ENCODE measurements at regions of chr17 and their contacts with region 1.

Region 1: DNA sequence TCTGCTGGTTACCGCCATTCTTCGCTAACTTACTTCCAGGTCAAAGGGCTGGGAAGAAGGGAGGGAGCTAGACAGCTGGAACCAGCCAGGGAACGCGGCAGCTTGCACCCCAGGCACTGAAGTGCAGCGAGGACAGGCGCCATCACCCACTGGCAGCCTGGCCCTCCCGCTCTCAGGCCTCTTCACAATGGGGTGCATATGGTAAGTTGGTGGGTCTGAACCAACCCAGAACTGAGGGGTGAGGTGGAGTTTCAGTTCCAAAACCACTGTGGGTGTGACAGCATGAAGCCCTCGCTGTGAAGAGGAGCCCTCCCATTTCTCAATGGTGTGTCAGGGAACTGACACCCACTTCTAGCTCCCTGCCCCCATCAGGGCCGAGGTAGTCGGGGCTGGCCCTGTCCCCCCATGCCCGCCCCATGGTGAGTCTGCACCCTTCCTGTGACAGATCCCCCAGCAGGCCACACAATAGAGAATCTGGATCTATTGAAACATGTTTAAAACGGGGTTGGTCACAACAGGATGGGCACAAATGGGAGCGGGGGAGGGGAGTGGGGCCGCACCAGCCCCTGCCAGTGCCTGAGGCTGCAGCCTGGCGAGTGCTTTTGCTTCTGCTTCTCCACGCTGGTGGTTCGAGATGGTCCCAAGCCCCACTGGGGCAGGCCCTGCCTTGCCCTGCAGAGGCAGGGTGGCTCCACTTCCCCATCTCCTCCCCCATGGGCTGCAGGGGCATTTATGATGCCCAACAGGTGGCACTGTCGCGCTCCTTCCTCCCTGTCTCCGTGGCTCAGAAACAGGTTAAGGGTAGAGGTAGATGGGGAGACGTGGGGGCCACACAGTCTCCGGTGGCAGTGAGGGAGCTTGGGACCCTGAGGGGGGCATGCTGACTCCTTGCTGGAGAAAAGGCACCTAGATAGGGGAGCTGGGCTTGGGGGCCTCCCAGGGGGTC is 2.3 kb downstream of the LIMD2 start:
- DNase-seq: no peak
- H3K4me3 ChIP-seq: no peak overlapping the region
- CTCF ChIP-seq: peak; percentile 66

Region 2: DNA sequence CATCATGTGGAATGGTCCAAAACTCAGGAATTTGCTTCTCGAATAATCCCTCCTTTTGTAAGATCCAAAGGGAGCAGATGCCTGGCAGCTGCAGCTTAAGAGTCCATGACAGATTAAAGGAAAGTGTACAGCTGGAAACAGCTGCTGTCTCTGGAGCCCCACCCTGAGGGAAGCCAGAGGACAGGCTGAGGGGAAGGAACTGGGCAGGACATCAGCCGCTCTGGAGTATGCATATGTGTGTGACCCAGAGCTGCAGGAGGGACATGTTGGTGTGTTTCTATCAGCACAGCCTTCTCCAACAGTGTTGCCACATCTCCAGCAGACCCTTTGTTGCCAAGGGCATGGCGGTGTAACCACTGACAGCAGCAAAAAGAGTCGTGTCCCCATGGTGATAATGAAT is 297.8 kb before region 1 on chr17:
- CTCF ChIA-PET with region 1: no interaction called
- POLR2A ChIA-PET with region 1: no interaction called
- DNase-seq: no peak
- H3K4me3 ChIP-seq: no peak overlapping the region
- CTCF ChIP-seq: no peak

Region 3: GRCh38 chr17:63486317-63487013 is 211.1 kb before region 1 on chr17:
- CTCF ChIA-PET with region 1: no interaction called
- POLR2A ChIA-PET with region 1: no interaction called
- DNase-seq: no peak
- H3K4me3 ChIP-seq: no peak overlapping the region
- CTCF ChIP-seq: no peak

Region 4: DNA sequence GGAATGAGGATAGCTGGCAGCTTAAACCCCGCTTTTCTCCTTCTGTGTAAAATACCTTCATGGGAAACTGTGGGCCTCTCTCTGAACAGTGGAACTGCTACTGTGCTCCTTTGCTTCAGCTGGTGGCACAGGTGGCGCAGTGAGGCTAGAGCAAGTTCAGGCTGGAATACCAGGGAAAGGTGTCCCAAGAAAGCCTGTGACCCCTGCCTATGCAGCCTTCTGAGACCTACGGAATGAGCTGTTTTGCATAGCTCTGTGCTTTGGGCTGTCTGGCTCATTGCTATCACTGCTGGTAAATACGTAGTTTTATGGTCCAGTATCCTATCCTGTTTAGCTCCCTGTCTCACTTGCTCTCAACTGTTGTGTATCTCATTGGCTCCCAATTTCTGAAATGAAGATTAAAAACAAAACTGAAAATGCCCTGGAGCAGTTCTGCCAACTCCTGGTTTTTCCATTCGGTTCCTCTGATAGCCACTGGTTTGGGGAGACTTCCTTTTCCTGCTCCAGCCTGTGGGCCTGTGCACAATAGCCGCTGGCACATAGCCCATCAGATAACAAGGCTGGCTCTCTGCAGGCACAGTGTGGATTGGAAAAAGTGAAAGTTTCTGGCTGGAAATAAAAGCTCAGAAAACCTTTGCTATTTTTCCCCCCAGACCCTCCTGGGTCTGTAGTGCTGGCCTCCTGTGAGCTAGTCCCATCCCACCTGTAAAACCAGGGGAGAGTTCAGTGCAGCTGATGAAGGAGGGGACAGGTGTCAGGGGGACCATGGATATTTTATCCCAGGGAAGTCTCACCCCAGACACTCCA is 21.8 kb before region 1 on chr17:
- CTCF ChIA-PET with region 1: interaction called, 73 read pairs
- POLR2A ChIA-PET with region 1: no interaction called
- DNase-seq: peak; percentile 21
- H3K4me3 ChIP-seq: no peak overlapping the region
- CTCF ChIP-seq: no peak

Region 5: DNA sequence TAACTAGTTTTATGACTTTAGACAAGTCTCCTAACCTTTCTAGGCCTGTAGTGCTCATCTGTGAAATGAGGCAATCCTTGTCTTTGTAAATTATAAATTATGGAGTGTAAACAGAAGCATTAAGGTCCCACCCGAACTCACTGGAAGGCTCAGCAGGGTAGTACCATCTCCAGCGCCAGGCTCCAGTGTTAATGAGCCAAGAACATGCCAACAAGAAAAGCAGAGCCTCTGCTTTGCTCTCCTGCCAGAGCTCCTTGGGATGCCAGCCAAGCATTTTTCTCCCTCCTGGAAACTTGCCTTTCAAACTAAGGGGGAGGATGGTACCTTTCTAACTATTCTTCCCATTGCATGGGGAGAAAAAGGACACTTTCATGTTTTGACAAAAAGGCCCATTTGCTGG is 12.6 kb before region 1 on chr17:
- CTCF ChIA-PET with region 1: interaction called, 73 read pairs
- POLR2A ChIA-PET with region 1: interaction called, 4 read pairs
- DNase-seq: no peak
- H3K4me3 ChIP-seq: no peak overlapping the region
- CTCF ChIP-seq: no peak

Region 6: DNA sequence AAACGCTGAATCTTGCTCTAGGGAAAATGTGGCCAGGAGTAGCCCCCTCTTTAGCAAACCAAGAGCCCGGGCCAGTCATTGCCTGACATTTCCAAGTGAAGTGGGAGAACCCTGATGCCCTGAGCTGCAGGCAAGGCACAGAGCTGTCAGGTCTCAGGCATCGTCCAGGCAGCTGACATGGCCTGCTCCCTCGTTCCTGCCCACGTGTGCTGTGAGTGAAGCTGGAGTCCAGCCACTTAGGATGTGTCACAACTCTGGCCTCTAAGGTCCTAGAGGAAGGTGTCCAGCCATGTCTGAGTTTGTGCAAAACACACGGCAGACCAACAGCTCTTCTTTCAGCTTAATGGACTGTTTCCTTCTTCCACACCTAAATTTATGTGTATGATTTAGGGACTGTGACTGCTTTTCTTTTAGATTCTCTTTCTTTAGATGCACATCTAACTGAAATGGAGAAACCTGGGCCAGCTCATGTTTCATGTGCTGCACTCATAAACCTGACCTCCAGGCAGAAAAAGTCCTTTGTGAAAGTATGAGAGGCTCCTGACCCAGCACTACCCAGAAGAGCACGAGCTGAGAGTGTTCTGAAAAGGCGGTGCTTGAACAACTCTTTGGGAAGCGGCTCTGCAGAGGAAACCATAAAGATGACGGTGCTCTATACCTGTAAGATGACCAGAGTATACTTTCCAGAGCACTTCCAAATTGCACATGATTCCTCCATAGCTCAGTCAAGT is 17.1 kb after region 1 on chr17:
- CTCF ChIA-PET with region 1: interaction called, 13 read pairs
- POLR2A ChIA-PET with region 1: no interaction called
- DNase-seq: no peak
- H3K4me3 ChIP-seq: no peak overlapping the region
- CTCF ChIP-seq: no peak

Measured in AG04449 (cell line).